Left ventricle myocardium superior (tissue), 1 donor: ENCODE measurements at regions of chrX and their contacts with region 1.

Region 1: GRCh38 chrX:74521961-74522751 is 92.3 kb downstream of the RLIM start:
- DNase-seq: no peak
- ATAC-seq: peak; percentile 84

Region 2: DNA sequence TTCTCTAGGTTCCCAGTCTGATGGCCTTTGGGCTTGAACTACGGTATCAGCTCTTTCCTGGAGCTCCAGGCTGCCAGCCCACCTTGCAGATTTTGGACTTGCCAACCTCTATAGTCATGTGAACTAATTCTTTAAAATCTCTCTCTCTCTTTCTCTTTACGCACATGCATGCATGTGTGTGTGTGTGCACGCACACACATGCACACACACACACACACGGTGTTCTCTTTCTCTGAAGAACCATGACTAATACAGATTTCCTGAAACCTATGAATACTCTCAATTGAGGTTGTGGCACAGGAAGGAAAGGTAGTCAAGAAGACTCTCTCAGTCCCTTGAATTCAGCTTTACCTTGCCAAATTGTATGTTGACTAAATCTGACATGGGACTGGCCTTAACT is 224.4 kb before region 1 on chrX:
- intact Hi-C with region 1: no loop called
- DNase-seq: no peak
- ATAC-seq: no peak

Region 3: GRCh38 chrX:74382613-74383012 is 139.5 kb before region 1 on chrX:
- intact Hi-C with region 1: loop called (anchors 10 kb)
- DNase-seq: peak; percentile 58
- ATAC-seq: peak; percentile 93

Region 4: DNA sequence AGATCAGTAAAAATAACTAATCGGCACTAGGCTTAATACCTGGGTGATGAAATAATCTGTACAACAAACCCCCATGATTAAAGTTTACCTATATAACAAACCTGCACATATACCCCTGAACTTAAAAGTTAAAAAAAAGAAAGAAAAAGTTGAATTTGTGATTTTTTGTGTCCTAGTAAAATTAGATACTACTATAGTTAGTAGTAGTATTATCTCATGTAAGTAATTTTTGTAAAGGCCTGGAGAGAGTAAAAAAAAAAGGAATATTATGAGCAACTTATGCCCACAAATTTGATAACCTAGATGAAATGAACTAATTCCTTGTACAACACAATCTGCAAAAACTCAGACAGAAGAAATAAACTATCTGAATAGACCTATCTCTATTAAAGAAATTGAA is 126.6 kb before region 1 on chrX:
- intact Hi-C with region 1: no loop called
- DNase-seq: no peak
- ATAC-seq: no peak

Region 5: GRCh38 chrX:74656079-74656745 is 134.1 kb after region 1 on chrX:
- intact Hi-C with region 1: no loop called
- DNase-seq: no peak
- ATAC-seq: no peak

Region 6: DNA sequence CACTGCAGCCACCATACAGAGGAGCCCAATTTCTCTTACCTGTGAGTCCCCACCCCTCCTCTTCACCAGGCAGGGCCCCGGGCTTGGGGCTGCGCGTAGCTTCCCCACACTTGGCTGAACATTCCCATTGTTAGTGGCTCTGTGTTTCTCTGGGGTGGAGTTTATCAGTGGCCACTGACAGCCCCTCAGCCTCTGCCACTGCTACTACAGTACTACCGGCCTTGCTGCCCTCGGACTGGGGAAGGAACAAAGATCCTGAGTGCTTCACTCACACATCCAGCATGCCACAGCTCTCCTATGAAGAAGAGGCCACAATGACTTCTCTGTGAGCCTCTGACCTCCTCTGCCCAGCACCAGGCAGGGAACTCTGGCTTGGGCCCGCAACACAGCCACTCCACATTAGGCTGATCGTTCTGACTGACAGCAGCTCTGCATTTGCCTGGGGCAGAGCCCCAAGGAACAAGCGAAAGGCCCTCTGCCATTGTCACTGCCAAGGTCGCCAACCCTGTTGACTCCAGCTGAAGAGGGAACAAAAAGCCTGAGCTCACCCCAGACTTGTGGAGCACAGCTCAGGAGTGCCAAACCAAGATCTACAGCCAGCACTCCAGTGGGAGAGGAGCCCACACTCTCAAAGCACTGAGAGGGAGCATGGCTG is 609.9 kb after region 1 on chrX:
- intact Hi-C with region 1: no loop called
- DNase-seq: peak; percentile 33
- ATAC-seq: peak; percentile 86